Dendritic cell treated with granulocyte-macrophage colony-stimulating factor and Interleukin-4, amounts not matched to agents 40 ng/mL and 50 ng/mL, for 4 days (primary cell): ENCODE measurements at regions of chr3 and their contacts with region 1.

Region 1: DNA sequence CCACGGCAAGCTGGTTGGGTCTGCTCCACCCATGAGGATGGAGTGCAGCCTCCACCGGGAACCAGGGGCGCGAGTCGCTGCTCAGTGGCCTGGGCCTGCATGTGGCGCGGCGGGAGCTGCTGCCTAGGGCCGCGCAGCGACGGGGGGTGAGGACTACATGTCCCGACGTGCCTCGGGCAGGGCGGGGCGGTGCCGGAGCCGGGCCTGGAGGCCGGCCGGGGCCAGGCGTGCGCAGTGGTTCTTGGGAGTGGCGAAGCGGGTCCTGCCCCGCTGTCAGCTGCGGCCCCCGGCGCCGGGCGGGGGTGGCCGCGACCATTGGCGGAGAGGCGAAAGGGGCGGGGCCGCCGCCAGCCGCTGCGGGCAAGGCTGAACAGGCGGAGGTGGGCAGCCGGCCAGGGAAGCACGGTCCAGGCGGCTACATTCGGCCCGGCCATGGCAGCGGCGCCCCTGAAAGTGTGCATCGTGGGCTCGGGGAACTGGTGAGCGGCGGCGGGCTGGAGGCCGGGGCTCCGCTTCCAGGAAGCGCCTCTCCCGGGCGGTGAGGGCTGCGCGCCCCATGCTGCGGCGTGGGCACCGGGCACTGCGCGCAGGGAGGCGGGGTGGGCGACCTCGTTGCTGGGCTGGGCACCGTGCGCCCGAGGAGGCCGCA is at the start of gene GPD1L:
- H3K4me3 Mint-ChIP-seq: peak within 1 kb of the TSS; percentile 90
- H3K27ac Mint-ChIP-seq: peak within 1 kb of the TSS; percentile 79
- H3K4me1 Mint-ChIP-seq: peaks cover 31% of the 10 kb centered on the region
- H3K27me3 Mint-ChIP-seq: no peaks in the 10 kb centered on the region

Region 2: DNA sequence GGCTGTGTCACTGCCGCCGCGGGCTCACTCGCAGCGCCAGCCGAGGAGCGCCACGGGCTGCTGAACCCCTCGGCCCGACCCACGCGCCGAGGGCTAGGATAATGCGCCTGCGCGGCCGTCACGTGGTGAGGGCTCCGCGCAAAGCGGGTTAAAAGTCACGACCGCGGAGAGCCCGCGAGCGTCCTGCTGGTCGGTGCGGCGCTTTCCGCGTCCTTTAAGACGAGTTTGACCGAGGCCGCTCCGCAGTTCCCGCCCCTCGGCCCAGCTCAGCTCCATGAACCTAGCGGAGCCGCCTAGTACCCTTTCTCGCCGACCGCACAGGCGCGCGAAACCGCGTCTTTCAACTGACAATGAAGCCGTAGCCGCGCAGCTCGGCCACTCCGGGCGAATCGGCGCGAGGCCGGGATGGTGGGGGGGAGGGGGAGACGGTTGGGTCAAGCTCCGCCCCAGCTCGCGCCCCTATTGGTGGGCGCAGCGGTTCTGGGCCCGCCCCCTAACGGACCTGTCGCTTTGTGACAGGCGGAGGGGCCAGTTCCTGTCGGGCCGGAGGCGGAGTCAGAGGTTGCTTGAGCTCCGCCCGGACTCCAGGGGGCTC is 574.3 kb before region 1 on chr3:
- intact Hi-C with region 1: loop called (anchors 5 kb)
- H3K4me3 Mint-ChIP-seq: peak overlapping the region; percentile 94
- H3K27ac Mint-ChIP-seq: peak overlapping the region; percentile 97
- H3K4me1 Mint-ChIP-seq: peaks cover 12% of the 10 kb centered on the region
- H3K27me3 Mint-ChIP-seq: no peaks in the 10 kb centered on the region

Region 3: DNA sequence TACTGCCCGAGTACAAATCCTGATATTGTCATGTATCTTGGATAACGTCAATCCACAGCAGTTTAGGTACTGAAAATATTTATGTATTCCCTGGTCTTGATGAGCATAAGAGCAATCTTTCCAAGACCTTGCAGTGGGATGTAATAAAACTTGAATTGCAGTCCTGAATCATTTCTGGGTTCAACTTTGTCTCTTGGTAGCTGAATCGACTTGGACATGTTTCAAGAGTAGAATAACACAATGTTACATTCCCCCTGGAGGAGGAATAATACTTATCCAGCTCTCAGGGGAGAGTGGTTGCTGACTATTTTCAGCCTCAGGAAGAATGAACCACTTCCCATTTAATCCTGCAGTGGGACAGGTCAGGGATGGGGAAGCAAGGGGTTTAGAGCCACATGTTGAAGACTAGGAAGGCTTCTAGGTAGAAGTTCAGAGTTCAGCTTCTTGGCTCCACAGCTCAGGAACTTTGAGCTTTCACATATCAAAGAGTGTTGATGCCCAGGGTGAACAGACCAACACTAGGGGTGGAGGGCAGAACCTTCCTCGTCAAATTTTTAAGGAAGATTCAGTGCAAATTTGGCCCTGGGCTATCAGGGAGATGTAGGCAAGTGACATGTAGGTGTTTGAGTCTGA is 43.3 kb before region 1 on chr3:
- intact Hi-C with region 1: no loop called
- H3K4me3 Mint-ChIP-seq: no peak overlapping the region
- H3K27ac Mint-ChIP-seq: no peak overlapping the region
- H3K4me1 Mint-ChIP-seq: peaks cover 9% of the 10 kb centered on the region
- H3K27me3 Mint-ChIP-seq: peaks cover 3% of the 10 kb centered on the region

Region 4: GRCh38 chr3:32120471-32120870 is 14.1 kb after region 1 on chr3:
- intact Hi-C with region 1: loop called (anchors 2 kb)
- H3K4me3 Mint-ChIP-seq: no peak overlapping the region
- H3K27ac Mint-ChIP-seq: peak overlapping the region; percentile 91
- H3K4me1 Mint-ChIP-seq: peaks cover 63% of the 10 kb centered on the region
- H3K27me3 Mint-ChIP-seq: no peaks in the 10 kb centered on the region